H1 (cell line): ENCODE measurements at regions of chr2 and their contacts with region 1.

Region 1: DNA sequence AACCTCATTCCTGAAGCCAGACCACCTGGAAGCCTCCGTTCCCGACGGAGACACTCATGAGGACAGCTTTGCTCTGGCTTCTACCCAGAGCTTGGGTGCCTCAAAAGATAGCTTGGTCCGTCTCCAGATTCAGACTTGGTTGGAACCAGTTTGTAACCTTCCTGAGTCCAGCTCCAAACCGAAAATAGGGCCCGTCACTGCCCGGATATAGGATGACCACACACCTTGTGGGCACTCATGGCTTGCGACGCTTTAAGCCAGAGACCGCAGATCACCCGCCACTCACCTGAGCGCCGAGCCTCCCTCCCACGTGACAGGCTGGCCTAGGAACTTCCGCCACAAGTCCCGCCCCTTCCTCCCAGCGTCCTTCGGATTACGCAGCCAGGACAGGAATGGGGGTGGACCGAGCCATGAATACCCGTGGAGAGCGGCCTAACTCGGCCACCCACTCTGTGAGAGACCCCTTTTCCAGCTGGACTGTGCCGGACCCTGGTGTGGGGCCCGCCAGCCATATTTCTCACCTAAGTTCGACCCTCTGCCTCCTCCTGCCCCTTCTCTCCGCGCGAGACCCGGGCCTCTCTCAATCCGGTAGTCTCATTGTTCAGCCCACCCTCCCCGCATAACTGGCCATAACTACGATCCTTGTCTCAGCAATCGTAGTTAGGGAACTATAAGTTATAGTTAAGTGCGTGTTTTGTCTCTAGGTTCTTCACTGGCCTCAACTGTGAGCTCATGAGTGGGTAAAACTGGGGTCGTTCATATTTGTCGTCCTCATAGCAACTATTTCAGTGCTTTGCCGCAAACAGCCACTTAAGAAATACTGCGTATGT is at the start of gene MPV17:
- DNase-seq: peak; percentile 80 to 88
- H3K4me3 ChIP-seq: peak within 1 kb of the TSS; percentile 85 to 99 (median 88)
- H3K27ac ChIP-seq: peak within 1 kb of the TSS; percentile 94
- H3K4me1 ChIP-seq: peaks cover 0 to 10% (median 0%) of the 10 kb centered on the region in 4 experiments; a peak in 4 of 7 replicates
- H3K27me3 ChIP-seq: no peaks in the 10 kb centered on the region
- CTCF ChIP-seq: no peak
- EP300 ChIP-seq: no peak
- POLR2A ChIP-seq: peak; percentile 91 to 98
- RAD21 ChIP-seq: no peak
- total RNA-seq, gene MPV17: 45.2 and 46.1 TPM in 2 replicates

Region 2: GRCh38 chr2:27249891-27250651 is 72.9 kb before region 1 on chr2:
- CTCF ChIA-PET with region 1: interaction called, 3 read pairs
- POLR2A ChIA-PET with region 1: interaction called, 14 read pairs
- DNase-seq: peak; percentile 57 to 93
- H3K4me3 ChIP-seq: peak overlapping the region in 2 of 4 experiments; percentile 30 to 52; a peak in 4 of 8 replicates
- H3K27ac ChIP-seq: no peak overlapping the region
- H3K4me1 ChIP-seq: peaks cover 2 to 11% (median 6%) of the 10 kb centered on the region in 4 experiments
- H3K27me3 ChIP-seq: peaks cover 0 to 6% (median 2%) of the 10 kb centered on the region in 4 experiments; a peak in 5 of 7 replicates
- CTCF ChIP-seq: peak; percentile 86 to 98 (median 93)
- EP300 ChIP-seq: no peak
- POLR2A ChIP-seq: peak in 1 of 2 experiments; percentile 47; a peak in 1 of 3 replicates
- RAD21 ChIP-seq: peak; percentile 95 to 96

Region 3: GRCh38 chr2:27281855-27282559 is 41.0 kb before region 1 on chr2 and contains the start of gene TRIM54:
- CTCF ChIA-PET with region 1: interaction called, 13 read pairs
- POLR2A ChIA-PET with region 1: interaction called, 7 read pairs
- DNase-seq: no peak
- H3K4me3 ChIP-seq: peak within 1 kb of the TSS; percentile 1 to 43 (median 35); a peak in 7 of 8 replicates
- H3K27ac ChIP-seq: no peak within 1 kb of the TSS
- H3K4me1 ChIP-seq: peaks cover 4 to 18% (median 13%) of the 10 kb centered on the region in 4 experiments
- H3K27me3 ChIP-seq: peaks cover 0 to 4% (median 0%) of the 10 kb centered on the region in 4 experiments; a peak in 1 of 7 replicates
- CTCF ChIP-seq: no peak
- EP300 ChIP-seq: no peak
- POLR2A ChIP-seq: no peak
- RAD21 ChIP-seq: no peak
- total RNA-seq, gene TRIM54: 3.9 and 4.2 TPM in 2 replicates

Region 4: GRCh38 chr2:27303093-27304025 is 19.6 kb before region 1 on chr2:
- CTCF ChIA-PET with region 1: interaction called, 128 read pairs
- POLR2A ChIA-PET with region 1: interaction called, 105 read pairs
- DNase-seq: peak in 1 of 2 experiments; percentile 64
- H3K4me3 ChIP-seq: peak overlapping the region in 1 of 4 experiments; percentile 14; a peak in 1 of 8 replicates
- H3K27ac ChIP-seq: no peak overlapping the region
- H3K4me1 ChIP-seq: peaks cover 0 to 26% (median 13%) of the 10 kb centered on the region in 4 experiments; a peak in 5 of 7 replicates
- H3K27me3 ChIP-seq: peaks cover 29 to 34% (median 32%) of the 10 kb centered on the region in 4 experiments
- CTCF ChIP-seq: peak in 2 of 3 experiments; percentile 74 to 81; a peak in 3 of 4 replicates
- EP300 ChIP-seq: no peak
- POLR2A ChIP-seq: no peak
- RAD21 ChIP-seq: peak; percentile 63 to 70

Region 5: DNA sequence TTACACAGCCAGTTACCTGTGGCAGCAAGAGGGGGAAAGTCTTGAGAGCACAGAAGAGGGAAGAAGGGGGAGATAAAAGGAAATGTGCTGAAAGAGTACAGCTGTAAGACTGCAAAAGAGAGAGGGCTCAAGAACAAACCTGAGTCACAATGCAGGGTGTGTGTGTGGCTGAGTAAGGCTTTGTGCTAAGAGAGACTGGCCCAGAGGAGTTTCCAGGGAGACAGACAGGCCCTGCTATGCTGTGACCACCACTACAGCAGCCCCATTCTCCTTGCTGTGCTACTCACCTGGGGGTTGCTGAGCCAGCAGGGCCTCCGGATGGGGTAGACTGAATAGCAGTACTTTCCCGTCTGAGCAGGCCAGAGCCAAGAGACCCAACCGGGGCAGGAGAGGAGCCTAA is 12.3 kb after region 1 on chr2:
- CTCF ChIA-PET with region 1: interaction called, 4 read pairs
- POLR2A ChIA-PET with region 1: interaction called, 31 read pairs
- DNase-seq: no peak
- H3K4me3 ChIP-seq: no peak overlapping the region
- H3K27ac ChIP-seq: no peak overlapping the region
- H3K4me1 ChIP-seq: no peaks in the 10 kb centered on the region
- H3K27me3 ChIP-seq: no peaks in the 10 kb centered on the region
- CTCF ChIP-seq: no peak
- EP300 ChIP-seq: no peak
- POLR2A ChIP-seq: no peak
- RAD21 ChIP-seq: no peak

Region 6: GRCh38 chr2:27356382-27357181 is 33.6 kb after region 1 on chr2 and contains the start of gene GTF3C2:
- CTCF ChIA-PET with region 1: interaction called, 3 read pairs
- POLR2A ChIA-PET with region 1: interaction called, 40 read pairs
- DNase-seq: peak; percentile 92 to 93
- H3K4me3 ChIP-seq: peak within 1 kb of the TSS; percentile 68 to 97 (median 90)
- H3K27ac ChIP-seq: peak within 1 kb of the TSS; percentile 95
- H3K4me1 ChIP-seq: peaks cover 0 to 12% (median 4%) of the 10 kb centered on the region in 4 experiments; a peak in 4 of 7 replicates
- H3K27me3 ChIP-seq: no peaks in the 10 kb centered on the region
- CTCF ChIP-seq: no peak
- EP300 ChIP-seq: no peak
- POLR2A ChIP-seq: peak; percentile 59 to 91
- RAD21 ChIP-seq: no peak
- total RNA-seq, gene GTF3C2: 118 and 129 TPM in 2 replicates

Region 7: GRCh38 chr2:27380626-27381545 is 57.9 kb after region 1 on chr2 and contains the start of gene ZNF513:
- CTCF ChIA-PET with region 1: interaction called, 4 read pairs
- POLR2A ChIA-PET with region 1: interaction called, 21 read pairs
- DNase-seq: peak; percentile 91 to 94
- H3K4me3 ChIP-seq: peak within 1 kb of the TSS; percentile 65 to 96 (median 82)
- H3K27ac ChIP-seq: peak within 1 kb of the TSS; percentile 93
- H3K4me1 ChIP-seq: peaks cover 0 to 8% (median 2%) of the 10 kb centered on the region in 4 experiments; a peak in 5 of 7 replicates
- H3K27me3 ChIP-seq: no peaks in the 10 kb centered on the region
- CTCF ChIP-seq: no peak
- EP300 ChIP-seq: peak; percentile 15 to 94
- POLR2A ChIP-seq: peak in 1 of 2 experiments; percentile 84; a peak in 2 of 3 replicates
- RAD21 ChIP-seq: peak in 1 of 2 experiments; percentile 5; a peak in 1 of 4 replicates
- total RNA-seq, gene ZNF513: 17.3 and 18.8 TPM in 2 replicates